ENCODE measurements at regions of chr12 and their contacts with region 1.

Region 1: GRCh38 chr12:120580787-120581723 is at the start of gene POP5:
- DNase-seq: peak; percentile 99
- H3K4me3 ChIP-seq: peak within 1 kb of the TSS; percentile 78 to 90 (median 84)
- H3K27ac ChIP-seq: peak within 1 kb of the TSS; percentile 64 to 81 (median 76)
- H3K4me1 ChIP-seq: peaks cover 21 to 41% (median 38%) of the 10 kb centered on the region in 4 donors
- H3K27me3 ChIP-seq: no peaks in the 10 kb centered on the region
- CTCF ChIP-seq: peak in 2 of 3 experiments; percentile 10 to 33
- EP300 ChIP-seq: no peak
- POLR2A ChIP-seq: no peak
- total RNA-seq, gene POP5: 20.7 to 36.1 (median 23.1) TPM

Region 2: GRCh38 chr12:120481022-120481767 is 99.9 kb before region 1 on chr12:
- intact Hi-C with region 1: no loop called
- DNase-seq: no peak
- H3K4me3 ChIP-seq: no peak overlapping the region
- H3K27ac ChIP-seq: no peak overlapping the region
- H3K4me1 ChIP-seq: no peaks in the 10 kb centered on the region
- H3K27me3 ChIP-seq: no peaks in the 10 kb centered on the region
- CTCF ChIP-seq: no peak
- EP300 ChIP-seq: no peak
- POLR2A ChIP-seq: no peak

Region 3: GRCh38 chr12:120649442-120650232 is 68.6 kb after region 1 on chr12:
- intact Hi-C with region 1: loop called (anchors 2 kb)
- DNase-seq: no peak
- H3K4me3 ChIP-seq: peak overlapping the region; percentile 46 to 56 (median 49)
- H3K27ac ChIP-seq: peak overlapping the region; percentile 43 to 76 (median 73)
- H3K4me1 ChIP-seq: peaks cover 38 to 56% (median 44%) of the 10 kb centered on the region in 4 donors
- H3K27me3 ChIP-seq: peaks cover 0 to 26% (median 7%) of the 10 kb centered on the region in 4 donors
- CTCF ChIP-seq: peak in 1 of 3 experiments; percentile 25
- EP300 ChIP-seq: no peak
- POLR2A ChIP-seq: no peak

Region 4: GRCh38 chr12:120677765-120678473 is 96.9 kb after region 1 on chr12:
- intact Hi-C with region 1: no loop called
- DNase-seq: no peak
- H3K4me3 ChIP-seq: no peak overlapping the region
- H3K27ac ChIP-seq: peak overlapping the region in 2 of 4 donors; percentile 47 to 48
- H3K4me1 ChIP-seq: peaks cover 0 to 5% (median 2%) of the 10 kb centered on the region in 4 donors
- H3K27me3 ChIP-seq: no peaks in the 10 kb centered on the region
- CTCF ChIP-seq: no peak
- EP300 ChIP-seq: no peak
- POLR2A ChIP-seq: no peak

Region 5: DNA sequence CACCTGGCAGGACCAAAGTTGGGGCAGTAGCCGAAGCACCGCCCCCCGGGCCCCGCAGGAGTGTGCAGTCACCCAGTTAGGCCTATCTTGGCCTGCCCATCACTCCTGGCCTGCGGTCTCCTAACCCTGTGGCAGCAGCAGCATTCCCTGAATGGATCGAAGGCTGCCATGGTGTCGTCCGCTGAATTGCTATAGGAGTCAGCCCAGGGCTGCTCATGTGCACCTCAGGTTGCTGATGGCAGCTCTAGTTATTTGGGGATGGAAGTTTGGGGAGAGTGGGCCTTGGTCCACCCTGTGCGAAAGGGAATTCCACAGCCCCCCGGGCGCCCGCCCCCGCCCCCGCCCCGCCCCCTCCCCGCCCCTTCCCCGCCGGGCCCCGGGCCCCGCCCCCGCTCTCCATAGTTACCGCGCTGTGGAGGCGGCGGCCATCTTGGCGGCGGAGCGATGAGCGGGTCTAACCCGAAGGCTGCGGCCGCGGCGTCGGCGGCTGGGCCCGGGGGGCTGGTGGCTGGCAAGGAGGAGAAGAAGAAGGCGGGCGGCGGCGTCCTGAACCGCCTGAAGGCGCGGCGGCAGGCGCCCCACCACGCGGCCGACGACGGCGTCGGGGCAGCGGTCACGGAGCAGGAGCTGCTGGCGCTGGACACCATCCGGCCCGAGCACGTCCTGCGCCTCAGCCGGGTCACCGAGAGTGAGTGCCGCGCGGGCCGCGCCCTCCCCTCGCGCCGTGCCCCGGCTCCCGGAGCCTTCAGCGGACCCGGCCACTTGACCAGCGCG is 129.2 kb after region 1 on chr12 and contains the start of gene UNC119B:
- intact Hi-C with region 1: loop called (anchors 2 kb)
- DNase-seq: no peak
- H3K4me3 ChIP-seq: peak within 1 kb of the TSS; percentile 70 to 97 (median 80)
- H3K27ac ChIP-seq: peak within 1 kb of the TSS; percentile 89 to 93 (median 91)
- H3K4me1 ChIP-seq: peaks cover 17 to 36% (median 33%) of the 10 kb centered on the region in 4 donors
- H3K27me3 ChIP-seq: no peaks in the 10 kb centered on the region
- CTCF ChIP-seq: no peak
- EP300 ChIP-seq: no peak
- POLR2A ChIP-seq: no peak
- total RNA-seq, gene UNC119B: 20.0 to 30.8 (median 28.5) TPM

Region 6: GRCh38 chr12:120971299-120972179 is 390.5 kb after region 1 on chr12:
- intact Hi-C with region 1: loop called (anchors 2 kb)
- DNase-seq: no peak
- H3K4me3 ChIP-seq: no peak overlapping the region
- H3K27ac ChIP-seq: no peak overlapping the region
- H3K4me1 ChIP-seq: no peaks in the 10 kb centered on the region
- H3K27me3 ChIP-seq: no peaks in the 10 kb centered on the region
- CTCF ChIP-seq: peak; percentile 69 to 77 (median 72)
- EP300 ChIP-seq: no peak
- POLR2A ChIP-seq: no peak

Region 7: DNA sequence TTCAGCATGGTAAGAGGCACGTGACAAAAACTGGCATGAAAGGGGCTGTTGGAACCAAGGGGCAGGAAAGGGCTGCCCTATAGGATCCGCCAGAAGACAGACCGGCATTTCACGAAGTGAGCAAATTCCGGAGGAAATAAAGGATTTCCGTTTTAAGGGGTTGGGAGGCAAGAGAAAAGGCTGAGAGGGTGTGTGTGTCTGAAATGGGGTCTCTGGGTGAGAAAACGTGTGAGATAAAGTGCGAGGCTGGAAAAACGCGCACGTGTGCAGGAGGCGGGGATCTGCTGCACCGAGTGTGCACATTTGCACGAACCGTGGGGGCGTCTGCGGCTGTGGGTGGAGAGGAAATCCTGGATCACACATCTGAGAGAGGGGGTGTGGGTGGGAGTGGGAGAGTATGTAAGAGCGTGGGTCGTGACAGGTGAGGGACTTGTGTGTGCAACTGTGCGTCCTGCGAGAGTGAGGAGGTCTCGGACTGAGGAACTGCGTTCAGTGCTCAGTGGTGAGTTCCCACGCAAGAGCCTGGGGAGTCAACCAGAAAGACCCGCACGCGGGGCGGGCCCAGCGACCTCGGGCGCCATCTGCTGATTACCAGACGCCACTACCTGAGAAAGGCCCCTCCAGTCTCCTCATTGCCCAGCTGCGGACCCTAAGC is 514.6 kb after region 1 on chr12:
- intact Hi-C with region 1: loop called (anchors 10 kb)
- DNase-seq: no peak
- H3K4me3 ChIP-seq: peak overlapping the region; percentile 15 to 38 (median 34)
- H3K27ac ChIP-seq: peak overlapping the region in 1 of 4 donors; percentile 22
- H3K4me1 ChIP-seq: peaks cover 6 to 13% (median 11%) of the 10 kb centered on the region in 4 donors
- H3K27me3 ChIP-seq: peaks cover 0 to 29% (median 3%) of the 10 kb centered on the region in 4 donors
- CTCF ChIP-seq: peak; percentile 57 to 84 (median 76)
- EP300 ChIP-seq: no peak
- POLR2A ChIP-seq: no peak

Measured in esophagus muscularis mucosa (tissue), 4 donors.